ENCODE measurements at regions of chr15 and their contacts with region 1.

Region 1: DNA sequence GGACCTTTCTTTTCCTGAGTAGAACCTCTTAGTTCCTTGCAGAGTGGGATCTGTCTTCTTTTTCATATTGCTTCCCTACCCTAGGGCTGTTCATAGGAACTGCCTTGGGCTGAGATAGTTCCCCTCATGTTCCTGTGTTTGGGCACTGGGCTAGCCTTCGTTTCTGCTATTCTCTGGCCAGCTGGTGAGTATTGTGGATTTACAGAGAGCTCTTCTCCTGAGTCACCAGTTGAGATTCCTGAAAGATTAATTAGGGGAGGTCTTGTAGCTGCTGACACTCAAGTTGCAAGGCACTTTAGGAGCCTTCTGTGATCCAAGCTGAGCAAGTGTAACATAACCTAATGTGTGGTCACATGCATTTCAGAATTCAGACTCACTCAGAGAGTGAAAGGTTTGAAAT is 30.7 kb downstream of the CHD2 start:
- DNase-seq: no peak
- ATAC-seq: peak; percentile 94 to 97 (median 96)
- H3K4me3 ChIP-seq: no peak overlapping the region
- H3K27ac ChIP-seq: peak overlapping the region; percentile 87
- H3K4me1 ChIP-seq: peaks cover 48% of the 10 kb centered on the region
- H3K27me3 ChIP-seq: no peaks in the 10 kb centered on the region
- CTCF ChIP-seq: no peak

Region 2: GRCh38 chr15:92853222-92853621 is 77.6 kb before region 1 on chr15:
- intact Hi-C with region 1: loop called in 1 of 2 experiments (anchors 2 kb)
- DNase-seq: no peak
- ATAC-seq: no peak
- H3K4me3 ChIP-seq: no peak overlapping the region
- H3K27ac ChIP-seq: no peak overlapping the region
- H3K4me1 ChIP-seq: no peaks in the 10 kb centered on the region
- H3K27me3 ChIP-seq: no peaks in the 10 kb centered on the region
- CTCF ChIP-seq: no peak

Region 3: GRCh38 chr15:92968926-92969651 is 38.3 kb after region 1 on chr15:
- intact Hi-C with region 1: loop called (anchors 5 kb)
- DNase-seq: no peak
- ATAC-seq: peak in 3 of 4 donors; percentile 9 to 48 (median 26)
- H3K4me3 ChIP-seq: no peak overlapping the region
- H3K27ac ChIP-seq: peak overlapping the region; percentile 28
- H3K4me1 ChIP-seq: peaks cover 16% of the 10 kb centered on the region
- H3K27me3 ChIP-seq: no peaks in the 10 kb centered on the region
- CTCF ChIP-seq: no peak

Region 4: DNA sequence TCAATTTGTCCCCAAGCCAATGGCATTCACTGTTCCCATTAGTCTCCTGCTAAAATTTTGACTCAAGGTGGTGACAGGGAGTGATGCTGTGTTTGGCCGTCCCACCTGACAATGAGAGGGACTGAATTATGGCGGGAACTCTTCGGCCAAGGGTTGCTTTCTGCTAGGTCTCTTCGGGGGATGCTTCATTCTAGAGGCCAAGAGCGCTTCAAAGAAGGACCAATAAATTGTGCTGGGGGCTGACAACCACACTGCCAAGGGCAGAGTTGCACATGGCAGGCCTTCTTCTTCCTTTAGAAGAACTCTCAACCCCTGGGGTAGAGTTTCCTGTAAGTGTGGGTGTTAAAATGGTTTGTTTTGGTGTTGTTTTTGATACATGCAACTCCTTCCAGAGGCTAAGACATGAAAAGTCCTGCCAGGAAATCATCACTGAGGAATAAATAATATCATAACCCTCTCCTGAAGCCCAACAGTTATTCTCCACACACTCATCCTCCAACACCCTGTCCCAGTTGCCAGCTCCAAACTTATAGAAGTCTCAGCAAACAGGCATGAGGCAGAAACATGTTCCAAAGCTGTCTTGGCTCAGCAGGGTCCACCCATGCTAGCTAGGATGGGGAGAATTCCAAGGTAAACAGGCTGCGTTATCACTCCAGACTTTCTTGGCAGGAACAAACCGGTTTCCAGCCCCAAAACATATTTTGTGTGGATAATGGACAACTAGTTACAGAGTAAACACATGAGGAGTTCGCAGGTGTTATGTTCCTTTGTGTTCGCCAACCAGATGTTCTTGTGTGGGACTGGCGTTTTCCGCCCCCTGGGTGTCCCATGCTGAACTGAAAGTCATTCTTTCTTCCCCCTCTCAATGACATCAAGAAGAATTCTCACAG is 554.9 kb after region 1 on chr15:
- intact Hi-C with region 1: no loop called
- DNase-seq: peak; percentile 47 to 84
- ATAC-seq: peak; percentile 40 to 76 (median 58)
- H3K4me3 ChIP-seq: no peak overlapping the region
- H3K27ac ChIP-seq: peak overlapping the region; percentile 80
- H3K4me1 ChIP-seq: peaks cover 18% of the 10 kb centered on the region
- H3K27me3 ChIP-seq: no peaks in the 10 kb centered on the region
- CTCF ChIP-seq: no peak

Measured in psoas muscle (tissue), 8 donors.